ENCODE measurements at regions of chr12 and their contacts with region 1.

Region 1: DNA sequence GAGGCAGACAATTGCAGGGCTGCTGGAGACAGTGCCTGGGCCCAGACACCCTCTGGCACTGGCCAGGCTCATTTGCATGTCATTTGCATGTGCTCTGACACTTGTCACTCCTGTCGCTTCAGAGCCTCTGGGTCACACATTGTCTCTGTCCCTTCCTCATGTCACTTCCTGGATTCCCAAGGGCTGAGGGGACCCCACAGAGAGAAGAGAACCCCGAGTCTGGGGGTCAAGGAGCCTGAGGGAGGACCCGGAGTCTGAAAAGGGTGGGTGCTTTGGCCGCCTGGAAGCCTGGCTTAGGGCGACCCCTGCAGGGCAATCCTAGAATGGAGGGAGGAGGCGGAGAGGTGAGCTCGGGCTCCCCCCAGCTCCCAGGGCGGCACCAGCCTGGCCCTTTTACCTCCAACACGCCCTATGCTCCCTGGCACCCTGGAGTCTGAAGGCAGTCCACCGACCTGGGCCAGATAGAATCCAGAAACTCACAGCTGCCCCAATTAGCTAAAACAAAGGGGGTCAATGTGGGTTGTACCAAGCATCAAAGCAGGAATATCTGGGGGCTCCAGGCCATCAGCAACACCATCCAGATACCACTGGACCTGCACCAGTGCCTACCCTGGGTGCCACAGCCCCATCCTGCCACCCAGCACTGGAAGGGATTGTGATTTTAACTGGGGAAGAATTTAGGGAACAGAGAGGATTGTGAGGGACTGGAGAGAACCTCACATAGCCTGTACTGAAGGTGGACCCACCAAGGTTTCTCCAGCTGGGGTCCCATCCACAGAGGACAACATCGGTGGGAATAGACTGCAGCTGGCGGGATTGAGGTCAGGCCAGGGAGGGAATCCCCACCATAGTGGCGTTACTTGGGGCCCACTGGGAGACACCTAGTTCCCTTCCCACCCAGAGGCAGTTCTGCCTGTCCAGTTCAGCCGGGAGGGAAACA is 21.8 kb upstream of the KRT78 start:
- DNase-seq: peak in 8 of 10 donors; percentile 32 to 71 (median 50)
- H3K4me3 ChIP-seq: no peak overlapping the region
- H3K27ac ChIP-seq: peak overlapping the region in 8 of 59 donors; percentile 11 to 46 (median 27)
- H3K27me3 ChIP-seq: peaks cover 0 to 7% (median 0%) of the 10 kb centered on the region in 45 donors
- CTCF ChIP-seq: peak; percentile 14 to 84 (median 73)

Region 2: GRCh38 chr12:52389313-52390207 is 481.1 kb before region 1 on chr12:
- intact Hi-C with region 1: loop called in 1 of 2 experiments (anchors 5 kb)
- DNase-seq: peak in 7 of 10 donors; percentile 52 to 81 (median 68)
- H3K4me3 ChIP-seq: no peak overlapping the region
- H3K27ac ChIP-seq: peak overlapping the region in 21 of 59 donors; percentile 5 to 78 (median 59)
- H3K27me3 ChIP-seq: no peaks in the 10 kb centered on the region
- CTCF ChIP-seq: no peak

Region 3: GRCh38 chr12:52582971-52583456 is 287.6 kb before region 1 on chr12:
- intact Hi-C with region 1: loop called (anchors 2 to 5 kb)
- DNase-seq: peak in 5 of 10 donors; percentile 11 to 68 (median 56)
- H3K4me3 ChIP-seq: no peak overlapping the region
- H3K27ac ChIP-seq: no peak overlapping the region
- H3K27me3 ChIP-seq: no peaks in the 10 kb centered on the region
- CTCF ChIP-seq: peak; percentile 22 to 83 (median 70)

Region 4: DNA sequence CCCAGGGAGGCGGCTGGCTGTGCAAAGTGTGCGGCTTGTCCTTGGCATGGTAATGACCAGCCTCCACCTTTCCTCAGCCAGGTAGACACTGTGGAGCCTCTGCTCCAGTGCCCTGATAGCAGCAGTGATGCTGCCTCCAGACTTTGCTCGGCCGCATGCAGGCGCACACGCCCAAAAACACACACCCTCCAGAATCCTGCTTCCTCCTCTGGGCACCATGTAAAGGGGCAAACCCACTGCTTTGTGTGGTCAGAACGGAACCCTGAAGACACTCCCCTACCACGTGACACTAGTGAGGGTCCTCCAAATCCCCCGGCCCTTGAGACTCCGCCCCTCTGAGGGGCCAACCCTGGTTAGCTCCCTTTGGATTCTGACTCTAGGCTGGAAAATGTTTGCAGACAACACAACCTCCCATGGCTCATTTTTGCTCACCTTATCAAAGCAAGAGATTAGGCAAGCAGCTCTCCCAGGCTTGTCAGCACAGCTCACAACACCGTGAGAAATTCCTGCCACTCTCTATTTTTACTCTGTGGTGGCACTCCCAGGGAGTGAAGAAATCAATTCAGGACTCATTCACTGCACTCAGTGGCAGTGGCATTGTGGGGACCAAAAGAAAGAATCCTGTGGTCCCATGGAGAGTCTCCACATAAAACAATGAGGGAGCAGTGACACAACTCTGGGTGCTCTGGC is 171.8 kb before region 1 on chr12:
- intact Hi-C with region 1: no loop called
- DNase-seq: no peak
- H3K4me3 ChIP-seq: no peak overlapping the region
- H3K27ac ChIP-seq: no peak overlapping the region
- H3K27me3 ChIP-seq: peaks cover 0 to 7% (median 0%) of the 10 kb centered on the region in 45 donors
- CTCF ChIP-seq: no peak

Region 5: GRCh38 chr12:52729147-52729546 is 141.5 kb before region 1 on chr12:
- intact Hi-C with region 1: no loop called
- DNase-seq: no peak
- H3K4me3 ChIP-seq: no peak overlapping the region
- H3K27ac ChIP-seq: no peak overlapping the region
- H3K27me3 ChIP-seq: peaks cover 0 to 7% (median 0%) of the 10 kb centered on the region in 45 donors
- CTCF ChIP-seq: no peak